ENCODE measurements at regions of chr5 and their contacts with region 1.

Region 1: DNA sequence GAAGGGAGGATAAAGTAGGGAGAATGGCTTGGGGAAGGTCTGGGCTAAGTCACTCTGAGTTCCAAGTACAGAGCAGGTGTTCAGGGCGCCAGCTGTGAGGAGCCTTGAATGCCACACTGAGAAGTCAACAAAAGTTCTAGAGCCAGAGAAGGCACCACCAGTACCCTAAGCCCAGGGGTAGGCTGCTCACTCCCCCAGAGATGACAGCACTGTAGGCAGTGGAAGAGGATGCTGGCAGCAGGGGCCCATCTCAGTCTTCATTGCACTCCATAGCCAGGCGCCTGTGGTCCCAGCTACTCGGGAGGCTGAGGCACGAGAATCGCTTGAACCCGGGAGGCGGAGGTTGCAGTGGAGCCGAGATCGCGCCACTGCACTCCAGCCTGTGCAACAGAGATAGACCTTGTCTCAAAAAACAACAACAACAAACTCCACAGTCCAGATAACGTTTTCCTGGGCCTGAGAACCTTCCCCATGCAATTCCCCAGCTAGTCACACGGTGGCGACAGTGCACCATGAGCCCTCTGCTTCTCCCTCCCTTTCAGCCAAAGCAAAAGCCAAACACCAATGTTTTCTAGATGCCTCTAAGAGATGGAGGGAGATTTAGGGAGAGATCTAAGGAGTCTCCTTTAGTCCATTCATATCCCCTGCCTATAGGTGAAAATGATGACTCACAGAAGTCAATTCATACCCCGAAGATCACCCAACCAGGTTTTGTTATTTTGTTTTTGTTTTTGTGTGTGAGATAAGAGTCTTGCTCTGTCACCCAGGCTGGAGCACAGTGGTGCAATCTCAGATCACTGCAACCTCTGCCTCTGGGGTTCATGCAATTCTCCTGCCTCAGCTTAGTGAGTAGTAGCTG is 19.8 kb upstream of the NSD1 start:
- DNase-seq: peak; percentile 79 to 83
- H3K4me3 ChIP-seq: no peak overlapping the region
- H3K27ac ChIP-seq: no peak overlapping the region
- H3K4me1 ChIP-seq: no peaks in the 10 kb centered on the region
- H3K27me3 ChIP-seq: no peaks in the 10 kb centered on the region
- CTCF ChIP-seq: peak; percentile 97 to 99 (median 98)
- POLR2A ChIP-seq: no peak

Region 2: GRCh38 chr5:177303121-177303924 is 189.5 kb after region 1 on chr5 and contains the starts of genes PRELID1 and RAB24:
- intact Hi-C with region 1: loop called (anchors 10 kb)
- DNase-seq: peak; percentile 83 to 87
- H3K4me3 ChIP-seq: peak within 1 kb of the TSS; percentile 67 to 85
- H3K27ac ChIP-seq: peak within 1 kb of the TSS; percentile 66 to 79
- H3K4me1 ChIP-seq: peaks cover 0 to 12% of the 10 kb centered on the region in 2 donors
- H3K27me3 ChIP-seq: no peaks in the 10 kb centered on the region
- CTCF ChIP-seq: peak in 3 of 4 experiments; percentile 30 to 33 (median 30)
- POLR2A ChIP-seq: peak; percentile 18 to 69
- total RNA-seq, gene PRELID1: 25.4 to 73.1 (median 49.0) TPM
- total RNA-seq, gene RAB24: 8.2 to 62.0 (median 19.3) TPM